ENCODE measurements at regions of chr22 and their contacts with region 1.

Region 1: GRCh38 chr22:34150023-34150422 is 229.7 kb upstream of the LARGE1 start:
- DNase-seq: no peak
- H3K4me3 ChIP-seq: no peak overlapping the region
- H3K27ac ChIP-seq: no peak overlapping the region
- H3K4me1 ChIP-seq: no peaks in the 10 kb centered on the region
- H3K27me3 ChIP-seq: no peaks in the 10 kb centered on the region
- CTCF ChIP-seq: no peak
- EP300 ChIP-seq: no peak
- POLR2A ChIP-seq: no peak

Region 2: DNA sequence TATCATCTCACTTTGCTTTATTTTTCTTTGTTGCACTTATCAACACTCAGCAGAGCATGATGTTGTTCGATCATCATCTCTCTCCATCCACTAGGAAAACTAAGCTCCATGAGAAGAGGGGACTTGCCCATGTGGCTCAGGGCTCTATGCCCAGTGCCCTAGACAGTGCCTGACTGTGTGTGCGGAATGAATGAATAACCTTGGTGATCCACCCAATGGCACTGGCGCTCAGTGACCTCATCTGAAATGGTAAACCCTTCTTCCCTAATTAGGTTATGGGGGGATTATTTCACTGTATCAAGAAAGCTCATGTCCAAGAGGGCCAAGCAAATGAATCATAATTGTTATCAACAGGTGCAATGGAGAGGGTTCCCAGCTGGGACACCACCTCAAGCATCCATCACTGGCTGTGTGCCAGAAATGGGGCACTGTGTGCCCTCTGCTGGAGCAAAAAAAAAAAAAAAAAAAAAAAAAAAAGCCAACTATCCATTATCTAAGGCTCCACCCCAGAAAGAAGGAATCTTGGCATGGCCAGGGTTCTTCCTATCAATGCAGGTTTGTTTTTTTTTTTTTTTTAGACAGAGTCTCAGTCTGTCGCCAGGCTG is 402.3 kb before region 1 on chr22:
- intact Hi-C with region 1: no loop called
- DNase-seq: peak; percentile 24 to 28
- H3K4me3 ChIP-seq: no peak overlapping the region
- H3K27ac ChIP-seq: peak overlapping the region; percentile 63 to 78 (median 68)
- H3K4me1 ChIP-seq: peaks cover 27 to 50% (median 45%) of the 10 kb centered on the region in 4 donors
- H3K27me3 ChIP-seq: no peaks in the 10 kb centered on the region
- CTCF ChIP-seq: no peak
- EP300 ChIP-seq: no peak
- POLR2A ChIP-seq: no peak

Region 3: DNA sequence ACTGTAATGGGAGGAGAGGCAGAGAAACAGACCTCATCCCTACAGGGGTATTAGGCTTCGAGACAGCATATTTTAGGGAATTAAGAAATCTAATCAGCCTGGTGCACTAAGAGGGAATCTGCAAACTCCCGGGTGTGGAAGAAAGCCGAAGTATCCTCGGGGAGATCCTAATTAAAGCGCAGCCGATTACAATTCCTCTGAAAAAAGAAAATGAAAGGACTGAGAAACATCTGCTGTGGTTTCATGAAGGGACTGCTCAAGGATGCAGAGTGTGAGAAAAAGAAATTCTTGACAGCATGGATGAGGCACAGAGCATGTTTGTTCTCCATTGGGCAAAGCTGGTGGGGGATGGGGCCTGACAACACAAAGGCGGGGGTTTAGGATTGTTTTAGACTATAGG is 60.3 kb after region 1 on chr22:
- intact Hi-C with region 1: loop called (anchors 10 kb)
- DNase-seq: no peak
- H3K4me3 ChIP-seq: no peak overlapping the region
- H3K27ac ChIP-seq: no peak overlapping the region
- H3K4me1 ChIP-seq: no peaks in the 10 kb centered on the region
- H3K27me3 ChIP-seq: no peaks in the 10 kb centered on the region
- CTCF ChIP-seq: no peak
- EP300 ChIP-seq: no peak
- POLR2A ChIP-seq: no peak